Activated CD8-positive, alpha-beta T cell treated with anti-CD3 and anti-CD28 coated beads for 36 hours (primary cell): ENCODE measurements at regions of chr13 and their contacts with region 1.

Region 1: DNA sequence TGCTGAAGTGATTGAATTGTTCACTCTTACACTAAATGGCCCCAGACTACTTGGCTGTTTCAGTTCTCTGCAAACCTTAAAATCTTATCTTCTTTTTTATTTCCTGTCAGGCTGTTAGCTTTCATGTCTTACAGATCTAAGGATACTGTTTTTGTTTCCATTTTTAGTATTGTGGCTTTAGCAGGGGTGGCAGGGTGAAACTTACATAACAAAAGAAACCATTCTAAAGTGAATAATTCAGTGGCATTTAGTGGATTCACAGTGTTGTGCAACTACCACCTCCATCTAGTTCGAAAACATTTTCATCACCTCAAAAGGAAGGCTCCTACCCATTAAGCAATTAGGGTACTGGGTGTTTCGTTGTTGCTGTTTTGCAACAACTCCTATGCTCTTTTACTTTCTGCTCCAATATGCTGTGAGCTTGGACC is 19.8 kb downstream of the TMEM272 start:
- DNase-seq: no peak
- ATAC-seq: peak; percentile 26
- H3K4me3 Mint-ChIP-seq: peak overlapping the region; percentile 74
- H3K27ac Mint-ChIP-seq: peak overlapping the region; percentile 94
- H3K4me1 Mint-ChIP-seq: peaks cover 85% of the 10 kb centered on the region
- H3K27me3 Mint-ChIP-seq: no peaks in the 10 kb centered on the region
- CTCF ChIP-seq: no peak

Region 2: GRCh38 chr13:51632591-51633362 is 192.4 kb before region 1 on chr13:
- CTCF ChIA-PET with region 1: no interaction called
- POLR2A ChIA-PET with region 1: no interaction called
- intact Hi-C with region 1: no loop called
- DNase-seq: no peak
- ATAC-seq: no peak
- H3K4me3 Mint-ChIP-seq: no peak overlapping the region
- H3K27ac Mint-ChIP-seq: no peak overlapping the region
- H3K4me1 Mint-ChIP-seq: peaks cover 51% of the 10 kb centered on the region
- H3K27me3 Mint-ChIP-seq: no peaks in the 10 kb centered on the region
- CTCF ChIP-seq: no peak

Region 3: DNA sequence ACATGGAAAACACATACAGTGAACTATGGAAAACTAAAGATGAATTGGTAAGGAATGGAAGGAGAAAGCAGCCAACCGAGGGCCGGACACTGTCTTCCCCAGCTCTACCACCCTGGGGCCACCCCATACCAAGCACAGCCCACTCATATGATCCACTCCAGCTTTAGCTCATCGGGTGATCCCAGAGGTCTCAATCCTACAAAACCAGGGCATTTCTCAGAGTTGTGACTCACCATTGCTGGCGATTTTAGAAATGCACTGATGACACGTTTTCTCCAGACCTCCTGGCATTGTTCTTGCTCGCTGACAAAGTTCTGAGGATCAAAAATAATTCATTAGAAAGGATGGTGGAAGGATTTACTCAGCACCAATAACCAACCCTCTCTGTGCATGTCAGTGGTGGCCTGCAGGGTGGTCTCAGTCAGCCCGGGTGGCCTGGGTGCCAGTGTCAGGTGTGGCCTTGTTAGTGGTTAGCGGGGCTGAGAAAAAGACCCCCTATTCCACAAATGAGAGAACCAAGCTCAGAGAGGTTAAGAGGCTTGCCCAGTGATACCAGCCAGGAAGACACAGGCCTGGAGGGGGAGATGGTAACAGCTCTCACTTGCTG is 13.2 kb after region 1 on chr13:
- CTCF ChIA-PET with region 1: interaction called, 42 read pairs
- POLR2A ChIA-PET with region 1: interaction called, 3 read pairs
- intact Hi-C with region 1: no loop called
- DNase-seq: peak; percentile 48
- ATAC-seq: peak; percentile 79
- H3K4me3 Mint-ChIP-seq: no peak overlapping the region
- H3K27ac Mint-ChIP-seq: no peak overlapping the region
- H3K4me1 Mint-ChIP-seq: peaks cover 31% of the 10 kb centered on the region
- H3K27me3 Mint-ChIP-seq: no peaks in the 10 kb centered on the region
- CTCF ChIP-seq: no peak